ENCODE measurements at regions of chr19 and their contacts with region 1.

Region 1: DNA sequence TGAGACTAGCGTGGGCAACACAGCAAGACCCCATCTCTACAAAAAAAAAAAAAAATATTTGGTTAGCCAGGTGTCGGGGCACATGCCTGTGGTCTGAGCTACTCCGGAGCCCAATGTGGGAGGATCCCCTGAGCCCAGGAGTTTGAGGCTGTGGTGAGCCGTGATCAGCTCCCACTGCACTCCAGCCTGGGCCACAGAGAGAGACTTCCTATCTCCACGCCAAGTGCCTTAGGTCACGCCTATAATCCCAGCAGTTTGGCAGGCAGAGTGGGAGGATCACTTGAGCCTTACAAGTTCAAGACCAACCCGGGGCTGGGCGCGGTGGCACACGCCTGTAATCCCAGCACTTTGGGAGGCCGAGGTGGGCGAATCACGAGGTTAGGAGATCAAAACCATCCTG is 8.7 kb upstream of the ADAT3 start:
- DNase-seq: no peak
- ATAC-seq: no peak
- H3K4me3 Mint-ChIP-seq: peak overlapping the region; percentile 80
- H3K27ac Mint-ChIP-seq: peak overlapping the region; percentile 98
- H3K4me1 Mint-ChIP-seq: peaks cover 24% of the 10 kb centered on the region
- H3K27me3 Mint-ChIP-seq: no peaks in the 10 kb centered on the region
- CTCF ChIP-seq: no peak

Region 2: GRCh38 chr19:1875646-1876495 is 20.6 kb before region 1 on chr19:
- CTCF ChIA-PET with region 1: interaction called, 5 read pairs
- POLR2A ChIA-PET with region 1: interaction called, 11 read pairs
- intact Hi-C with region 1: no loop called
- DNase-seq: peak; percentile 94
- ATAC-seq: peak; percentile 93
- H3K4me3 Mint-ChIP-seq: peak overlapping the region; percentile 99
- H3K27ac Mint-ChIP-seq: peak overlapping the region; percentile 97
- H3K4me1 Mint-ChIP-seq: peaks cover 29% of the 10 kb centered on the region
- H3K27me3 Mint-ChIP-seq: no peaks in the 10 kb centered on the region
- CTCF ChIP-seq: no peak

Region 3: DNA sequence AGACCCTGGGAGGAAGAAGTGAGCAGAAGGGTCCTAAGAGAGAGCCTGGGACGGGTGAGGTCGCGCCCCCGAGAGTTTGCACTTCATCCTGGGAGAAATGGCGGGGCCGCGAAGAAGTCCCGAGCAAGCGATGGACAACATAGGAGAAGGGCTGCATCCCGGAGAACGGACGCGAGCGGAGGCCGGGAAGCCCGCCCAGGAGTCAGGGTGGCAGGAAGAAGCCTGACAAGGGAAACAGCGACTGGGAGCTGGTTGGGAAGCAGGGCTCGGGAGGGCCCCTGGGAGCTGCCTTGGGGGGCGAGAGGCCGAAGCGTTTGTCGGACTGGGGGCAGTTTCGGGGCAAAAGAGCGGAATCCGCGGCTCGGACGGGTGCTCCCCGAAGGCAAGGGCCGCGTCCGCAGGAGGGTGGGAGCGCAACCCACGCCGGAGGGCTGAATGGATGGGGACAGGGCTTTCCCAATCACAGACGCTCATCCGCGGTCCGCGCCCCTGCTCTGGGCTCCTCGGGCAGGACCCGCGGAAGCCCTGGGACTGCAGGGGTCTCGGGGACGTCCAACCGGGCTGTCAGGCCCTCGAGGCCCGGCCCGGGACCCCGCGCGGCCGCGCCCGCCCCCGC is 11.7 kb before region 1 on chr19:
- CTCF ChIA-PET with region 1: interaction called, 5 read pairs
- POLR2A ChIA-PET with region 1: interaction called, 14 read pairs
- intact Hi-C with region 1: no loop called
- DNase-seq: no peak
- ATAC-seq: peak; percentile 1
- H3K4me3 Mint-ChIP-seq: peak overlapping the region; percentile 94
- H3K27ac Mint-ChIP-seq: peak overlapping the region; percentile 94
- H3K4me1 Mint-ChIP-seq: peaks cover 34% of the 10 kb centered on the region
- H3K27me3 Mint-ChIP-seq: no peaks in the 10 kb centered on the region
- CTCF ChIP-seq: no peak

Measured in activated CD8-positive, alpha-beta T cell treated with anti-CD3 and anti-CD28 coated beads for 36 hours (primary cell).